Activated B cell treated with CpG ODN at 0.5 μM for 24 hours (primary cell): ENCODE measurements at regions of chr17 and their contacts with region 1.

Region 1: GRCh38 chr17:58487589-58488427 is at the start of gene HSF5:
- DNase-seq: peak; percentile 79
- ATAC-seq: peak; percentile 96
- H3K4me3 Mint-ChIP-seq: peak within 1 kb of the TSS; percentile 69
- H3K27ac Mint-ChIP-seq: peak within 1 kb of the TSS; percentile 66
- H3K4me1 Mint-ChIP-seq: peaks cover 19% of the 10 kb centered on the region
- H3K27me3 Mint-ChIP-seq: no peaks in the 10 kb centered on the region
- CTCF ChIP-seq: no peak
- total RNA-seq, gene HSF5: 4.5 and 5.5 TPM in 2 replicates

Region 2: DNA sequence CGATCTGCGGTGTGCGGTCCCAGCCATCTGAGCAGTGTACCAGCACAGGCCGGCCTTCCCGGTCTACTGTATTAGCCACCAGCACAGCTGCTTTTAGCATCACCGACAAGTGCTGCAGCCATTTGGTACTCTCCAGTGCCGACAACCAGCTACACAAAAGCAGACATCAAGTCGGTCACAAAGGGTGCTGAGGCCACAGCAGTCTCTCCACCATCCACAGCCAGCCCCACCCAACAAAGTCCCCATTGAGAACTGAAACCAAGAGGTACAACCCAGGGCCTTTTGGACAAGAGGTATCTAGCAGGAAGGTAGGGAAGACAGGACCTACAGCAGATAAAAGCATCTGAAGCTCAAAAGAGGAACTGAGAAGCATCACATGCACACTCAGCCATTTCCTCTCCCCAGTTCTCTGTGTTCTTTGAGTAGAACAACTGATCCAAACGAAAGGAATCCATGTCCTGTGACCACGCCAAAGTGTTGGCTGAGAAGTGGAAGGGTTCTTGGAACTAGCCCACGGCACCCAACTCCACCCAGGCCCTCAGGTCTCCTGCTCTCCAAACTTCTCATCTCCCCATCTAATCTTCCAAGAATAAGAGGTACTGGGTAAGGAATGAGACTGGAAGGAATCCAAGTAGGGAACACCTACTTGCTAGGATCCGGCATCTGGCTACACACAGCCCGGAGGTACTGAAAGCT is 17.2 kb after region 1 on chr17:
- CTCF ChIA-PET with region 1: interaction called, 7 read pairs
- POLR2A ChIA-PET with region 1: interaction called, 33 read pairs
- intact Hi-C with region 1: loop called (anchors 1 kb)
- DNase-seq: peak; percentile 44
- ATAC-seq: peak; percentile 94
- H3K4me3 Mint-ChIP-seq: peak overlapping the region; percentile 64
- H3K27ac Mint-ChIP-seq: peak overlapping the region; percentile 97
- H3K4me1 Mint-ChIP-seq: peaks cover 28% of the 10 kb centered on the region
- H3K27me3 Mint-ChIP-seq: no peaks in the 10 kb centered on the region
- CTCF ChIP-seq: no peak

Region 3: DNA sequence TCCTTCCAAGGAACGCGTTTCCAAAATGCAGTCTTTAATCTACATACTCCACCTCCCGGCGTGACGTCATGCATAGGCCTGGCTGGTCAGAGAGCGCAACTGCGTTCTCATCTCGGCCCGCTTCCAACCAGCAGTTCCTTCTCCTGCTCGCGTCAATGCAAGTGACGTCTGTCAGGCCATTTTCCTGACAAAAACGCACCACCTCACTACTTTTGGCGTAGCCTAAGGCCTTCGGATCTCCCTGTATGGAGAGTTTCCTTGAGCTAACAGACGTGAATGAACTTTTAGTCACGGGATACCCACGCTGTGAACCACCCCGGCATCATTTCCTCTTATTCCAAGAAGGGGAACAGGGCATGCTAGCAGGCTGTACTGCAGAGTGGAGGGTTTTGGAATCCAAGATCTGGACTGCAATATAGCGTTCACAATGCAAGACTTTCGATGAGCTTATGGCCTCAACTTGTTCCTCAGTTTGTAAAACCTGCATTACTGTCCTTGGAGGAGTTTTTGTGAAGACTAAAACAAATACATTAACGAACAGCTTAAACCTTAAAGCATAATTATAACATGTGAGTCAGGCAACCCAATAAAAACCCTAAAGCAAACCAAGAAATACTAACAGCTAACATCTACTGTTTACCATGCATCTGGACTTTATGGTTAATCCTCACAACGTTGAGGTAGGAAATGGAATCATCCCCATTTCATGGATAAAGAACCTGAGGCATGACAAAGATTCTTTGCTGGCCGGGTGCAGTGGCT is 179.2 kb after region 1 on chr17:
- CTCF ChIA-PET with region 1: no interaction called
- POLR2A ChIA-PET with region 1: interaction called, 10 read pairs
- intact Hi-C with region 1: no loop called
- DNase-seq: peak; percentile 23
- ATAC-seq: peak; percentile 47
- H3K4me3 Mint-ChIP-seq: peak overlapping the region; percentile 66
- H3K27ac Mint-ChIP-seq: no peak overlapping the region
- H3K4me1 Mint-ChIP-seq: peaks cover 8% of the 10 kb centered on the region
- H3K27me3 Mint-ChIP-seq: peaks cover 16% of the 10 kb centered on the region
- CTCF ChIP-seq: no peak